ENCODE measurements at regions of chr1 and their contacts with region 1.

Region 1: DNA sequence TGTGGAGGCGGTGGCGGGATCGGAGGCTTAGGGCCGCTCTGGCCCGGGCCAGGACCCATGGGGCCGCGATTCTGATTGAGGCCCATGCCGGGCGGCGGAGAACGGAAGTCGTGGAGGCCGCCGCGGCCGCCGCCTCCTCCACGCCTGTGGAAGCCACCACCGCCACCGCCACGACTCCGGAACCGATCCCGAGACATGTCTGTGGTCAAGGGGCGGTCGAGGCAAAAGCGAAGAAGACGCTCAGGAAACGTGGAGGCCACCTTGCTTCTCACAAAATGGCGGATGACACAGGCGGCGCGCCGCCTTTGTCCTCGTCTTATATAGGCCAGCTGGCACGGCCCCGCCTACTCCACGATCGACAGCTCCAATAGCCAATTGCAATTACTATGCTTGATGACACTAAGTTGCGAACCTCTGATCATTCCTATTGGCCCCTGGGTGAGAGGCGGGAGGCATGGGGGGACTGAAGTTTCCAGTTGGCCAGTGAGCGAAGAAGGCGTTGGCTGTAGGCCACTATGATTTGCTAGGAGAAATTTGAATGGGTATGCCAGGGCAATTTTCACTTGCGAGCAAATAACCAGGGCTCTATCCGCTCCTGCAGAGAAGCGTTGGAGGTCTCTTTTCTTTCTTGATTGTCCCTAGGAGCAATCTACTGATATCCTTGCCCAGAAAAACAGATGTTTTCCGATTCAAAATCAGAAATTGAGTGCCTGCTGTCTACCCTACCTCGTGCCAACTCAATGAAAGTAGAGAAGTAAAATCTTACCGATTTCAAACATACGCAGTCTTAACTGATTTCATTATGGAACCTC is at the start of gene SFPQ:
- DNase-seq: peak; percentile 100
- H3K4me3 ChIP-seq: peak within 1 kb of the TSS; percentile 98 to 100 (median 99)
- H3K27ac ChIP-seq: peak within 1 kb of the TSS; percentile 97 to 100 (median 100)
- H3K4me1 ChIP-seq: peaks cover 33 to 42% (median 39%) of the 10 kb centered on the region in 4 donors
- H3K27me3 ChIP-seq: no peaks in the 10 kb centered on the region
- CTCF ChIP-seq: no peak
- EP300 ChIP-seq: no peak
- POLR2A ChIP-seq: peak; percentile 93
- total RNA-seq, gene SFPQ: 81.1 to 160 (median 127) TPM

Region 2: GRCh38 chr1:35030756-35031446 is 162.2 kb before region 1 on chr1:
- intact Hi-C with region 1: loop called (anchors 5 kb)
- DNase-seq: no peak
- H3K4me3 ChIP-seq: peak overlapping the region; percentile 67 to 86 (median 74)
- H3K27ac ChIP-seq: peak overlapping the region; percentile 89 to 93 (median 91)
- H3K4me1 ChIP-seq: peaks cover 11 to 38% (median 26%) of the 10 kb centered on the region in 4 donors
- H3K27me3 ChIP-seq: no peaks in the 10 kb centered on the region
- CTCF ChIP-seq: no peak
- EP300 ChIP-seq: no peak
- POLR2A ChIP-seq: no peak

Region 3: GRCh38 chr1:35369922-35370671 is 177.0 kb after region 1 on chr1:
- intact Hi-C with region 1: loop called (anchors 10 kb)
- DNase-seq: no peak
- H3K4me3 ChIP-seq: no peak overlapping the region
- H3K27ac ChIP-seq: peak overlapping the region; percentile 42 to 54 (median 50)
- H3K4me1 ChIP-seq: peaks cover 8 to 13% (median 12%) of the 10 kb centered on the region in 4 donors
- H3K27me3 ChIP-seq: no peaks in the 10 kb centered on the region
- CTCF ChIP-seq: no peak
- EP300 ChIP-seq: no peak
- POLR2A ChIP-seq: no peak

Region 4: GRCh38 chr1:35557292-35558063 is 364.4 kb after region 1 on chr1 and contains the starts of genes KIAA0319L and NCDN:
- intact Hi-C with region 1: loop called (anchors 5 kb)
- DNase-seq: peak; percentile 100
- H3K4me3 ChIP-seq: peak within 1 kb of the TSS; percentile 94 to 98 (median 96)
- H3K27ac ChIP-seq: peak within 1 kb of the TSS; percentile 98 to 99 (median 98)
- H3K4me1 ChIP-seq: peaks cover 58 to 88% (median 77%) of the 10 kb centered on the region in 4 donors
- H3K27me3 ChIP-seq: peaks cover 0 to 5% (median 0%) of the 10 kb centered on the region in 4 donors
- CTCF ChIP-seq: no peak
- EP300 ChIP-seq: no peak
- POLR2A ChIP-seq: peak; percentile 46
- total RNA-seq, gene KIAA0319L: 28.5 to 35.7 (median 32.7) TPM
- total RNA-seq, gene NCDN: 22.4 to 40.4 (median 29.2) TPM

Region 5: DNA sequence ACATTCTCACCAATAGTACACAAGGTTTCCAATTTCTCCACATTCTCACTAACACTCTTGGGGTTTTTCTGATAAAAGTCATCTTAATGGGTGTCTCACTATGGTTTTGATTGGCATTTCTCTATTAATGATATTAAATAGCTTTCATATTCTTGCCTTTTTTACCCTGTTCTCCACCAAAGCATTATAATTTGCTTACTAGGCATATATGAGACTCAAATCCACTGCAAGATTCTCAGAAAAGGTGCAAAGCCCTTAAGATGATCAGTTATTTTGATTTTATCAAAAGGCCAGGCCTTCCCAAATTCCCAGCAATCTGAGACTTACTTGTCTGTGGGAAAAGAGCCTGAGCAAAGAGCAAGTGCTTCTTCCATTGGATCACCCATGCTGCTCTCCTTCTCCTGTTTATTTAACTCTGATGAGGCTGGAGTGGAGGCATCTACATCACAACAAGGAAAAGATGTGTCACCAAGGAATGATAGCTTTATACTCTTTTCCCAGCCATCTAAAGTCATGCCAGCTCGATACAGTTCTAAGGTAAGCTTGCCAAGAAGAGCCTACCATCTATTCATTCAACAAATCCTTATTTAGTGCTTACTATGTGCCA is 552.2 kb after region 1 on chr1:
- intact Hi-C with region 1: no loop called
- DNase-seq: peak; percentile 57
- H3K4me3 ChIP-seq: no peak overlapping the region
- H3K27ac ChIP-seq: no peak overlapping the region
- H3K4me1 ChIP-seq: no peaks in the 10 kb centered on the region
- H3K27me3 ChIP-seq: no peaks in the 10 kb centered on the region
- CTCF ChIP-seq: no peak
- EP300 ChIP-seq: no peak
- POLR2A ChIP-seq: no peak